Activated CD8-positive, alpha-beta memory T cell treated with anti-CD3 and anti-CD28 coated beads, Interleukin-2, amount 10 ng/mL, durations not matched to agents 7 days and 5 days (primary cell): ENCODE measurements at regions of chr6 and their contacts with region 1.

Region 1: GRCh38 chr6:37018198-37019064 is 13.0 kb downstream of the FGD2 start:
- DNase-seq: peak; percentile 97
- ATAC-seq: peak; percentile 97
- H3K4me3 Mint-ChIP-seq: peak overlapping the region; percentile 5
- H3K27ac Mint-ChIP-seq: peak overlapping the region; percentile 80
- H3K4me1 Mint-ChIP-seq: peaks cover 52% of the 10 kb centered on the region
- H3K27me3 Mint-ChIP-seq: no peaks in the 10 kb centered on the region

Region 2: GRCh38 chr6:36851149-36851614 is 167.2 kb before region 1 on chr6:
- CTCF ChIA-PET with region 1: interaction called, 23 read pairs
- DNase-seq: peak; percentile 57
- ATAC-seq: no peak
- H3K4me3 Mint-ChIP-seq: no peak overlapping the region
- H3K27ac Mint-ChIP-seq: no peak overlapping the region
- H3K4me1 Mint-ChIP-seq: peaks cover 4% of the 10 kb centered on the region
- H3K27me3 Mint-ChIP-seq: no peaks in the 10 kb centered on the region

Region 3: GRCh38 chr6:36955671-36956445 is 62.6 kb before region 1 on chr6:
- CTCF ChIA-PET with region 1: interaction called, 25 read pairs
- DNase-seq: no peak
- ATAC-seq: peak; percentile 25
- H3K4me3 Mint-ChIP-seq: no peak overlapping the region
- H3K27ac Mint-ChIP-seq: no peak overlapping the region
- H3K4me1 Mint-ChIP-seq: peaks cover 47% of the 10 kb centered on the region
- H3K27me3 Mint-ChIP-seq: peaks cover 2% of the 10 kb centered on the region

Region 4: GRCh38 chr6:37051138-37052026 is 33.0 kb after region 1 on chr6:
- CTCF ChIA-PET with region 1: interaction called, 610 read pairs
- DNase-seq: peak; percentile 96
- ATAC-seq: peak; percentile 61
- H3K4me3 Mint-ChIP-seq: peak overlapping the region; percentile 83
- H3K27ac Mint-ChIP-seq: peak overlapping the region; percentile 96
- H3K4me1 Mint-ChIP-seq: peaks cover 74% of the 10 kb centered on the region
- H3K27me3 Mint-ChIP-seq: no peaks in the 10 kb centered on the region

Region 5: GRCh38 chr6:37083243-37084138 is 65.1 kb after region 1 on chr6:
- CTCF ChIA-PET with region 1: no interaction called
- DNase-seq: no peak
- ATAC-seq: no peak
- H3K4me3 Mint-ChIP-seq: no peak overlapping the region
- H3K27ac Mint-ChIP-seq: no peak overlapping the region
- H3K4me1 Mint-ChIP-seq: peaks cover 2% of the 10 kb centered on the region
- H3K27me3 Mint-ChIP-seq: peaks cover 4% of the 10 kb centered on the region

Region 6: GRCh38 chr6:37207903-37208456 is 189.5 kb after region 1 on chr6:
- CTCF ChIA-PET with region 1: interaction called, 899 read pairs
- DNase-seq: peak; percentile 97
- ATAC-seq: peak; percentile 85
- H3K4me3 Mint-ChIP-seq: peak overlapping the region; percentile 3
- H3K27ac Mint-ChIP-seq: peak overlapping the region; percentile 88
- H3K4me1 Mint-ChIP-seq: peaks cover 65% of the 10 kb centered on the region
- H3K27me3 Mint-ChIP-seq: no peaks in the 10 kb centered on the region

Region 7: GRCh38 chr6:37324131-37325033 is 306.0 kb after region 1 on chr6:
- CTCF ChIA-PET with region 1: interaction called, 10 read pairs
- DNase-seq: peak; percentile 53
- ATAC-seq: no peak
- H3K4me3 Mint-ChIP-seq: no peak overlapping the region
- H3K27ac Mint-ChIP-seq: no peak overlapping the region
- H3K4me1 Mint-ChIP-seq: peaks cover 18% of the 10 kb centered on the region
- H3K27me3 Mint-ChIP-seq: no peaks in the 10 kb centered on the region